ENCODE measurements at regions of chr11 and their contacts with region 1.

Region 1: DNA sequence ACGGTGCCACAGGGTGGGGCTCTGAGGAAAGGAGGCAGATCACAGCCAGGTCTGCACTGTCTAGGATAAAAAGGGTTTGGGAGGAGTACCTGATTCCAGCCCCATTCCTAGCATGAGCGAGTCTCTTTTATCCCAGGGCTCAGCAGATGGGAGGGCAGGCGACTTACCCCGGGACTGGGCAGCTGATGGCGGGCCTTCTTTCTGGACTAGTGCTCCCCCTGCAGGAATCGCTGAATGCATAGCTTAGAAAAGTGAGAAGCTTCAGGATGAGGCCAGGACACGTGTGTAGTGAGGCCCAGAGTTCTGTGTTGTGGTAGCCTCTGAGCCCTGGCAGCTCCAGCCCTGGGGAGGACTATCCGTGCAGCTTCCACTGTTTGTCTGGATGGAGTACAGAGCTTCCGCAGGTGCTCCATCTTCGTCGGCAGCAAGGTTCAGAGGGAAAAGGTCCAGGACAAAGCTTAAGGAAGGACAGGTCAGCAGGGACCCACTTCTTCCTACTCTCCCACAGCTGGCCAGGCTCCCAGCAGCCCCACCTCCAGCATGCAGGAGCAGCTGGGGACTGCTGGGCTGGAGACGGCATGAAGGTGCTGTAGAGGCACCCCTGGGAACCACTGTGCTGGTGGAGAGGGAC is 30.4 kb downstream of the COMMD9 start:
- DNase-seq: peak; percentile 44 to 73 (median 55)
- ATAC-seq: peak; percentile 59 to 92 (median 81)
- H3K4me3 ChIP-seq: no peak overlapping the region
- H3K27ac ChIP-seq: no peak overlapping the region
- H3K4me1 ChIP-seq: peaks cover 0 to 6% (median 0%) of the 10 kb centered on the region in 12 donors
- H3K27me3 ChIP-seq: peaks cover 0 to 15% (median 0%) of the 10 kb centered on the region in 9 donors
- CTCF ChIP-seq: peak; percentile 42 to 70 (median 56)
- POLR2A ChIP-seq: no peak

Region 2: DNA sequence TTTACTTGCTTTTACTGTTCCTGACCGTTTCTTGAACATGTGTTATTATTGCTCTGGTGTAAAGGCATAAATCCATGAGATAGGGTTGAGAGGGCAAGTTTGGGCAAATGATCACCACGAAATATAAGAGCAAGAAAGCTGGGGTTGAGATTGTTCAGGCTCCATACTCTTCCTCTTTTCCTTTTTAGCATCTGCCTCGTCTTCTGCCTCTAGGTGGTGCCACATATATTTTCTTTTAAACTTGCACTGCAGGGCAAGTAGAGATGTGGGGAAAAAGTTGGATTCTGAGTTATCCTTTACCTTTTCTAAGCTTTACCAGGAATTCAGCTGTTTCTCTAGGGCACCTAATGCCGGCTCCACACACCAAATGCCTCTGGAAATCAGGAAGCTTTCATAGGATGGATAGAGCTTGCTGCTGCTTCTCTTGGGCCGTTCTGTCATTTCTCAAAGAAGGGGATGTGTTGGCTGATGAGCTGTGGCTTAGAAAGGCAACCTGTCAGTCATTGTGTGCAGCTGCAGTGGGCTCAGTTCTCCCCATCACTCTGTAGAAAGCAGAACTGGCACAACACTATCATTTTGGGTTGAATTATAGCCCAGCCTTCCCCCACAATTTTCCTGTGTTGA is 216.7 kb before region 1 on chr11:
- intact Hi-C with region 1: loop called in 7 of 10 experiments (anchors 5 to 10 kb)
- DNase-seq: no peak
- ATAC-seq: peak in 1 of 4 donors; percentile 48
- H3K4me3 ChIP-seq: no peak overlapping the region
- H3K27ac ChIP-seq: no peak overlapping the region
- H3K4me1 ChIP-seq: peaks cover 0 to 4% (median 0%) of the 10 kb centered on the region in 12 donors
- H3K27me3 ChIP-seq: no peaks in the 10 kb centered on the region
- CTCF ChIP-seq: peak in 10 of 12 donors; percentile 21 to 60 (median 42)
- POLR2A ChIP-seq: no peak

Region 3: GRCh38 chr11:36123346-36124101 is 135.3 kb before region 1 on chr11:
- intact Hi-C with region 1: no loop called
- DNase-seq: no peak
- ATAC-seq: no peak
- H3K4me3 ChIP-seq: no peak overlapping the region
- H3K27ac ChIP-seq: no peak overlapping the region
- H3K4me1 ChIP-seq: no peaks in the 10 kb centered on the region
- H3K27me3 ChIP-seq: peaks cover 0 to 8% (median 0%) of the 10 kb centered on the region in 9 donors
- CTCF ChIP-seq: no peak
- POLR2A ChIP-seq: no peak

Region 4: GRCh38 chr11:36156161-36156816 is 102.6 kb before region 1 on chr11:
- intact Hi-C with region 1: loop called in 3 of 10 experiments (anchors 5 to 10 kb)
- DNase-seq: no peak
- ATAC-seq: no peak
- H3K4me3 ChIP-seq: no peak overlapping the region
- H3K27ac ChIP-seq: peak overlapping the region in 8 of 12 donors; percentile 9 to 58 (median 42)
- H3K4me1 ChIP-seq: peaks cover 0 to 51% (median 11%) of the 10 kb centered on the region in 12 donors
- H3K27me3 ChIP-seq: no peaks in the 10 kb centered on the region
- CTCF ChIP-seq: no peak
- POLR2A ChIP-seq: no peak

Region 5: DNA sequence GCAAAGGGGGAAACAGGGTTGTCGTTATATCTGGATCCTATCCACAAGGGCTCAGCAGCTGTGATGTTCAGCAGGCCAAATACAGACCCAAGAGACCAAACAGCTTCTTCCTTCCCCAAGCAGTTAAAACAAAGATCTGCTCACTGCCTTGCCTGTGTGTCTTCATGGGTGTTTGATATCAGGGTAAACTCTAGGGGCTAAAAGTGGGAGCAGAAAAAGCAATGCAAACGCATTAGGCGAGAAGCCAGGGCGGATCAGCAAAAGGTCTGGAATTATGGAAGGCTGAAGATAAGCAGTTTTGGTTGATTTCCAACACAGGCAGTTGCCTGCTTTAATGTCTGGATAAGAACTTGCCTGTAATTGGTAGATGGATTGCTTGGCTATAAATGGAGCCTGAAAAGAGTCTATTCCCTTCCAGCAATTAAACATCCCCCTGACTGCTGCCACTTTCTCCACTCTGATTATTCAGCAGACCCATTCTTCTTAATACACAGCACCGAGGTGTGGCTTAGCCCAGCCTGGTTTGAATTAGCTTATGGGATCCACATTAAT is 95.9 kb before region 1 on chr11:
- intact Hi-C with region 1: loop called in 3 of 10 experiments (anchors 5 to 10 kb)
- DNase-seq: peak in 3 of 5 donors; percentile 33 to 57 (median 40)
- ATAC-seq: peak; percentile 10 to 59 (median 47)
- H3K4me3 ChIP-seq: no peak overlapping the region
- H3K27ac ChIP-seq: no peak overlapping the region
- H3K4me1 ChIP-seq: peaks cover 0 to 43% (median 14%) of the 10 kb centered on the region in 12 donors
- H3K27me3 ChIP-seq: peaks cover 0 to 3% (median 0%) of the 10 kb centered on the region in 9 donors
- CTCF ChIP-seq: no peak
- POLR2A ChIP-seq: no peak

Measured in heart left ventricle (tissue), 16 donors.